ENCODE measurements at regions of chr5 and their contacts with region 1.

Region 1: DNA sequence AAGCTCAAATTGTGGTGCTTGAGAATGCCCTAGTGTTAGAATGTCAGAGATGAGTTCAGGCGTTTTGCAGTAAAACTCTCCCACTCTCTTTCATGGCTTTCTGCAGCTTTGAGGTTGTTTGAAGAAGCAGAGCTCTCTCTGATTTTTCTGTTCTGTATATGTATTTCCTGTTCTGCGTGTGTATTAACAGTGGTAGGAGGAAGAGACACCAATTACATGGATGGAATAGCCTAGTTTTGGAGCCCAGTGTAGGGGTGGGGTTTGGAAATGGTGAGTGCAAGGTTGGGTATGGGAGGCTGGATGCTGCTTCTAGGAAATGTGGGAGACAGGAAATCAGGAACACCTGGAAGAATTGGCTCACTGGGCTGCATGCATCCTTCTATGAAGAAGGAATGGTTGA is 12.4 kb downstream of the LARP1 start:
- DNase-seq: no peak
- H3K4me3 ChIP-seq: no peak overlapping the region
- H3K4me3 Mint-ChIP-seq: no peak overlapping the region
- H3K27ac ChIP-seq: peak overlapping the region in 1 of 2 donors; percentile 68
- H3K27ac Mint-ChIP-seq: peak overlapping the region; percentile 1 to 79 (median 13)
- H3K4me1 ChIP-seq: peaks cover 40 to 48% of the 10 kb centered on the region in 2 donors
- H3K4me1 Mint-ChIP-seq: peaks cover 62% of the 10 kb centered on the region
- H3K27me3 ChIP-seq: no peaks in the 10 kb centered on the region
- H3K27me3 Mint-ChIP-seq: peaks cover 0 to 3% (median 3%) of the 10 kb centered on the region in 3 donors
- CTCF ChIP-seq: no peak

Region 2: DNA sequence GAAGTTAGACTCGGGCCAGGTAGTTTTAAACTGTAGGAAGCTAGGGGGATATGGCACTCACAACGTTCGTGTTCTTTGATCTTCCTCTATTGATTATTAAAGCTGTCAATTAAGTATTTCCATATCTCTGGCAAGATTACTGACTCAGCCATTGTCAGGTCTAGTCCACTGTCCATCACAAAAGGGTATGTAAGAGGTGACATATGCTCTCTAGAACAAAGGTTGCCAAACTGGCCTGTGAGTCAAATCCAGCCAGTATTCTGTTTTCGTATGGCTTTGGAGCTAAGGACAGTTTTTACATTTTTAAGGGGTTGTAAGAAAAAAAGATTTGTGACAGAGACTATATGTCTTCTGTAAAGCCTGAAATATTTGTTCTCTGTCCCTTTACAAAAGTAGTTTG is 38.6 kb after region 1 on chr5:
- intact Hi-C with region 1: loop called in 1 of 2 experiments (anchors 5 kb)
- DNase-seq: no peak
- H3K4me3 ChIP-seq: no peak overlapping the region
- H3K4me3 Mint-ChIP-seq: no peak overlapping the region
- H3K27ac ChIP-seq: no peak overlapping the region
- H3K27ac Mint-ChIP-seq: peak overlapping the region in 2 of 7 donors; percentile 12 to 43
- H3K4me1 ChIP-seq: peaks cover 0 to 5% of the 10 kb centered on the region in 2 donors
- H3K4me1 Mint-ChIP-seq: peaks cover 3% of the 10 kb centered on the region
- H3K27me3 ChIP-seq: no peaks in the 10 kb centered on the region
- H3K27me3 Mint-ChIP-seq: no peaks in the 10 kb centered on the region
- CTCF ChIP-seq: no peak

Region 3: DNA sequence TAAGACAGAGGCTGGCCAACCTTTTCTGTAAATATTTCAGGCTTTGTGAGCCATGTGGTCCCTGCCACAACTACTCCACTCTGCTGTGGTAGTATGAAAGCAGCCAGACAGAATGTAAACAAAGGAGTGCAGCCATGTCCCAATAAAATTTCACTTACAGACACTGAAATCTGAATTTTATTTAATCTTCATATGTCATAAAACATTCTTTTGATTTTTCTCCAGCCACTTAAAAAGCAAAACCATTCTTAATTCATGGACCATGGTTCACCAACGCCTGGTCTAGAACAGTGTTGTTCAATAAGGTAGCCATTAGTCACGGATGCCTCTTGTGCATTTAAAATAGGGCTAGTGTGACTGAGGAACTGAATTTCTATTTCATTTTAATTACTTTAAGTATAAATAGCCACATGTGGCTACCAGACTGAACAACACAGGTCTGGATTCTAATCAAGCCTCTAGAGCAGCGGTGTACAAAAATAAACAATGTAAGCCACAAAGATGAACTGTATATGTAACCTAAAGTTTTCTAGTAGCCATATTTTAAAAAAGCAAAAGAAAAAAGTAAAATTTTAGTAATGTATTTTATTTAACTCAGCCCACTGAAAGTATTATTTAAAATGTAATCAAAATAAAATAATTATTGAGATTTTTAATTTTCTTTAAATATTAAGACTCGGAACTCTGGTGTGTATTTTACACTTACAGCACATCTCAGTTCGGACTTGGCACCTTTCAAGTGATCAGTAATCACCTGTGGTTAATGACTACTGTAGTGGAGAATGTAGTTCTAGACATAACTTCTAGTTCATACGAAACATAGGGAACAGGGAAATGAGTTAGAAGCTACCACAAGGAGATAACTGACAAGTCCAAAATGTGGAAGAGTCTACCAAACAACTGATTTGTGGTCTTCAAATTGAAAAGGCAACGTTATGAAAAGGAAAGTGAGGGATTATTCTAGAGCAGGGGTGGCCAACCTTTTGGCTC is 156.2 kb after region 1 on chr5:
- intact Hi-C with region 1: no loop called
- DNase-seq: no peak
- H3K4me3 ChIP-seq: no peak overlapping the region
- H3K4me3 Mint-ChIP-seq: no peak overlapping the region
- H3K27ac ChIP-seq: no peak overlapping the region
- H3K27ac Mint-ChIP-seq: no peak overlapping the region
- H3K4me1 ChIP-seq: no peaks in the 10 kb centered on the region
- H3K4me1 Mint-ChIP-seq: no peaks in the 10 kb centered on the region
- H3K27me3 ChIP-seq: no peaks in the 10 kb centered on the region
- H3K27me3 Mint-ChIP-seq: no peaks in the 10 kb centered on the region
- CTCF ChIP-seq: no peak

Measured in CD14-positive monocyte (primary cell).